ENCODE measurements at regions of chr16 and their contacts with region 1.

Region 1: DNA sequence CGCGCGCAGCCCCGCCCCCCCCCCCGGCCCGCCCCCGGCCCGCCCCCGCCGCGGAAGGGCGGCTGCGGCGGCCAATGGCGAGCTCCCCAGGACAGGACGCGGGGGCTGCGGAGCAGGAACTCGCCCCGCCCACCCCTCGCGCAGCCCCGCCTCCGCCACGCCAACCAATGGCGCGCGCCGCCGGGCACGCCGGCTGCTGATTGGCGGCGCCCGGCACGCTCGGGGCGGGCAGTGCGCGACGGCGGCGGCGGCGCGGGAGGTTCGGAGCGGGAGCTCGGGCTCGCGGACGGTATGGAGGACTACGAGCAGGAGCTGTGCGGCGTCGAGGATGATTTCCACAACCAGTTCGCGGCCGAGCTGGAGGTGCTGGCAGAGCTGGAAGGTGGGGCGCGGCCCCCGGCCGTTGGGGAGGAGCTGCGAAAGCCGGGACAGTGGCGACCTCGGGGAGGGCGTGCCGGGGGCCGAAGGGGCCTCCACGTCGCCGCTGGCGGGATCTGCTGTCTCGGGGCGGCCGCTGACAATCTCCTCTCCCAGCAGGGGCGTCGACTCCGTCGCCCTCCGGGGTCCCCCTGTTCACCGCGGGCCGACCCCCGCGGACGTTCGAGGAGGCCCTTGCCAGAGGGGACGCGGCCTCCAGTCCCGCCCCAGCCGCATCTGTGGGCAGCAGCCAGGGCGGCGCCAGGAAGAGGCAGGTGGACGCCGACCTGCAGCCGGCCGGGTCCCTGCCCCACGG is at the start of gene CHTF18:
- H3K4me3 ChIP-seq: peak within 1 kb of the TSS; percentile 83
- H3K27ac ChIP-seq: peak within 1 kb of the TSS; percentile 82
- H3K4me1 ChIP-seq: no peaks in the 10 kb centered on the region
- CTCF ChIP-seq: peak; percentile 32; the same call in 1 of the 2 replicates

Region 2: DNA sequence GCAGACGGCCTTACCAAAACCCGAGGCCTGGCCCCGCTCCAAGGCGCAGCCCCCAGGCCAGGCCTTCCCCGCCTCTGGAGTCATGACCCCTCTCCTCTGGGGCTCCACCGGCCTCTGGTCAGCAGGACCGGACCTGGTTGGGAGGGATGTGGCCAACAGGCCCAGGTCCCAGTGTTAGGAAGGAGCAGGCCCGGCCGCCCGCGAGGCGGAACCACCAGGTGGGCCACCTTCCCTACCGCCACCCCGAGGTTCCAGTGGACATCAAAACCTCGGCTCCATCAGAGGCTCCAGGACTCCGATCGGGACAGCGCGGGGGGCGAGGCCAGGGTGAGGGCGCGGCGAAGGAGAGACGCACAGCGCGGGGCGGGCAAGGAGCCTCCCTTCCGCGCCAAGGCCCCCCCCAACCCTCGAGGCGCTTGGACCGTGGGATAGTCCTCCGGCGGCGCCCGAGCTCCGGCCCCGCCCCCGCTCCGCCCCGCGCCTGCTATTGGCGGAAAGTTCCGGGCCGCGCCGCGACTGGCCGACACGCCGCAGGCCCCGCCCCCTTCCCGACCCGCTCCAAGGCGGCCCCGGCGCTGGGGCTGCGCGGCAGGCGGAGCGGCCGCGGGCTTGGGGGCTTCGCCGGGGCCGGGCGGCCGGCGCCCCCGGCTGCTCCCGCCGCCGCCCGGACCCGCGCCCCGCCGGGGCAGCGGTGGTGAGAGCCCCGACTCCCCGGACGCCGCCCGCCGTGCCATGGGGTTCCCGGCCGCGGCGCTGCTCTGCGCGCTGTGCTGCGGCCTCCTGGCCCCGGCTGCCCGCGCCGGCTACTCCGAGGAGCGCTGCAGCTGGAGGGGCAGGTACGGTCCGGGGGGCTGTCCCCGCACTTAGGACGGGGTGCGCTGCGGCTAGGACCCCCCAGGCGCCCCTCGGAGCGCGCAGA is 73.7 kb before region 1 on chr16 and contains the start of gene METRN:
- CTCF ChIA-PET with region 1: interaction called, 119 read pairs
- POLR2A ChIA-PET with region 1: interaction called, 25 read pairs
- H3K4me3 ChIP-seq: peak within 1 kb of the TSS; percentile 44
- H3K27ac ChIP-seq: peak within 1 kb of the TSS; percentile 66; the same call in 1 of the 2 replicates
- H3K4me1 ChIP-seq: peaks cover 9% of the 10 kb centered on the region
- CTCF ChIP-seq: no peak

Region 3: GRCh38 chr16:720990-721764 is 67.4 kb before region 1 on chr16 and contains the start of gene ANTKMT:
- CTCF ChIA-PET with region 1: interaction called, 34 read pairs
- POLR2A ChIA-PET with region 1: interaction called, 25 read pairs
- H3K4me3 ChIP-seq: peak within 1 kb of the TSS; percentile 66
- H3K27ac ChIP-seq: peak within 1 kb of the TSS; percentile 94
- H3K4me1 ChIP-seq: peaks cover 7% of the 10 kb centered on the region
- CTCF ChIP-seq: no peak; the same call in 1 of the 2 replicates

Region 4: GRCh38 chr16:740764-741505 is 47.6 kb before region 1 on chr16 and contains the start of gene CIAO3:
- CTCF ChIA-PET with region 1: interaction called, 16 read pairs
- POLR2A ChIA-PET with region 1: interaction called, 4 read pairs
- H3K4me3 ChIP-seq: peak within 1 kb of the TSS; percentile 80
- H3K27ac ChIP-seq: peak within 1 kb of the TSS; percentile 67; the same call in 1 of the 2 replicates
- H3K4me1 ChIP-seq: 0 out of 2 replicates have a peak, but pooled peaks cover 2% of the 10 kb centered on the region
- CTCF ChIP-seq: peak; percentile 99

Region 5: DNA sequence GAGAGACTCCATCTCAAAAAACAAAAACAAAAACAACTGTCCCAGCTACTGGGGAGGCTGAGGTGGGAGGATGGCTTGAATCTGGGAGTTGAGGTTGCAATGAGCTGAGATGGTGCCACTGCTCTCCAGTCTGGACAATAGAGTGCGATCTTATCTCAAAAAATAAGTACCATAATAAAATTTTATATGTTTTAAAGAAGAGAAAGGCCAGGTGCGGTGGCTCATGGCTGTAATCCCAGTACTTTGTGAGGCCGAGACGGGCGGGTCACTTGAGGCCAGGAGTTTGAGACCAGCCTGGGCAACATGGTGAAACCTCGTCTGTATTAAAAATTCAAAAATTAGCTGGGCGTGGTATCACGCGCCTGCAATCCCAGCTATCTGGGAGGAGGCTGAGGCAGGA is 11.7 kb before region 1 on chr16:
- CTCF ChIA-PET with region 1: interaction called, 14 read pairs
- POLR2A ChIA-PET with region 1: interaction called, 8 read pairs
- H3K4me3 ChIP-seq: no peak overlapping the region
- H3K27ac ChIP-seq: no peak overlapping the region
- H3K4me1 ChIP-seq: no peaks in the 10 kb centered on the region
- CTCF ChIP-seq: no peak

Region 6: GRCh38 chr16:799948-800833 is 11.6 kb after region 1 on chr16 and contains the start of gene GNG13:
- CTCF ChIA-PET with region 1: interaction called, 3 read pairs
- POLR2A ChIA-PET with region 1: interaction called, 23 read pairs
- H3K4me3 ChIP-seq: peak within 1 kb of the TSS; percentile 13
- H3K27ac ChIP-seq: no peak within 1 kb of the TSS
- H3K4me1 ChIP-seq: peaks cover 2% of the 10 kb centered on the region; the same call in 1 of the 2 replicates
- CTCF ChIP-seq: no peak

Region 7: GRCh38 chr16:807347-808084 is 19.0 kb after region 1 on chr16:
- CTCF ChIA-PET with region 1: interaction called, 3 read pairs
- POLR2A ChIA-PET with region 1: interaction called, 13 read pairs
- H3K4me3 ChIP-seq: peak overlapping the region; percentile 80
- H3K27ac ChIP-seq: peak overlapping the region; percentile 70
- H3K4me1 ChIP-seq: no peaks in the 10 kb centered on the region
- CTCF ChIP-seq: no peak

Measured in HEK293 (cell line).